A673 (cell line): ENCODE measurements at regions of chr3 and their contacts with region 1.

Region 1: DNA sequence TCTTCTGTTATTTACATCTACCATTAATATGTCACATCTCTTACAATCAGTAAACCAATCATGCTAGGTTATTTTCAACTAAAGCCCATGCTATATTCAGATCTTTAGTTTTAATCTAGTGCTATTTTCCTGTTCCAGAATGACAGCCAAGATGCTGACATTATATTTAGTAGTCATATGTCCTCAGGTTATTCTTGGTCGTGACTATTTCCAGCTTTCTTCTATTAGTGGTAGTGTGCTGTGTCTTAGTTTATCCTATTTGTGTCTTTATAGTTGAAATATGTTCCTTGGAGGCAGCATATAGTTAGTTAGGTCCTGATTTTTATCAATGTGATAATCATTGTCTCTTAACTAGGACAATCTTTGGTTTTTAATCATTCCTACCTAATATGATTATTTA is 566.5 kb downstream of the CADM2 start:
- DNase-seq: no peak
- H3K4me3 ChIP-seq: no peak overlapping the region
- H3K27ac ChIP-seq: no peak overlapping the region
- H3K4me1 ChIP-seq: no peaks in the 10 kb centered on the region
- H3K27me3 ChIP-seq: no peaks in the 10 kb centered on the region
- CTCF ChIP-seq: no peak

Region 2: GRCh38 chr3:85394424-85394823 is 130.8 kb before region 1 on chr3:
- CTCF ChIA-PET with region 1: no interaction called
- POLR2A ChIA-PET with region 1: interaction called, 19 read pairs
- intact Hi-C with region 1: no loop called
- DNase-seq: no peak
- H3K4me3 ChIP-seq: no peak overlapping the region
- H3K27ac ChIP-seq: no peak overlapping the region
- H3K4me1 ChIP-seq: no peaks in the 10 kb centered on the region
- H3K27me3 ChIP-seq: no peaks in the 10 kb centered on the region
- CTCF ChIP-seq: no peak